ENCODE measurements at regions of chr14 and their contacts with region 1.

Region 1: DNA sequence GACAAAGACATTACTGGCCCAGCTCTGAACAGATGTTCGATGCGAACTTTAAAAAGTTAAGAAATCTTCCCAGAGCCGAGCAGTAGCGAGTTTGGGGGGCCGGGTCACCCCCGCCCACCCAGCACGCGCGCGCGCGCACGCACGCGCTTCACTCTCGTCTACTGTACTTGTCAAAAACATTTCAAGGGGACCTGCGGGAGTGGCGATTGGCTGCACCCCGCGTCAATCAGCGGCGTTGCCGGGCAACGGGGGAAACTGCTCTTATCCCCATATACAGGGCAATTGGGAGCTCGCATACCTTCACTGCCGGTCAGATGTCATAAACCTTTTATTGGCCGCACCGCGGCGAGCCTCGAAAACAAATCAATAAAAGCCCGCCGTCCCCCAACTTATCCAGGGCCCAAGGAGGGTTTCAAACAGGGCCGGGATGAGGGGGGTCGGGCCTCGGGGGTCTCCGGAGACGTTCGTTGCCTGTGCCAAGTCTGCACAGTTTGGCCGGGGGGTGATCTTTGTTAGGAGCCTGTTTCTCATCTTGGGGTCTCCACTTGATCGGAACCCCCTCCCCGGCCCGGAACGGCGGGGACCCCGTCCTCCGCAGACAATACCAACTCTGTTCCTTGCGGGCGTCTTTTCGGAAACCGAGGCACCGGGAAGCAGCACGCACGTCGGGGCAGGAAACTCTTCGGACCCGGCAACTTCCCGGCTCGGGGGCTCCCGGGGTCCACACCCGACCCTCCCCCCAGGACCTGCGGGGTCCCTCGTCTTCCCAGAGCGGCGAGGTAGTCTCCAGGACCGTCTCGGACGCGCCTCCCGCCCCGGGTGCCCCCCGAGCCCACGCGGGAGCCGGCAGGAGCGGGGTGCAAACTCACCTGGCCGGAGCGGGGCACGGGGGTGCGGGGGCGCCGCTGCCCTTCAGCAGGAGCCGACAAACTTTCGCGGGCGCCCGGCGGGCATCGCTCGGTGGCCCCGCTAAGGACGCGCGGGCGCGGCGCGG is 734 bp downstream of the FOXN3 start:
- DNase-seq: peak; percentile 97 to 100 (median 99)
- H3K4me3 ChIP-seq: peak overlapping the region; percentile 3 to 99 (median 74)
- H3K27ac ChIP-seq: peak overlapping the region; percentile 77 to 98 (median 96)
- H3K4me1 ChIP-seq: peaks cover 9 to 29% of the 10 kb centered on the region in 2 donors
- H3K27me3 ChIP-seq: no peaks in the 10 kb centered on the region
- CTCF ChIP-seq: no peak
- POLR2A ChIP-seq: peak; percentile 6 to 91

Region 2: GRCh38 chr14:89185919-89186855 is 230.1 kb before region 1 on chr14:
- intact Hi-C with region 1: loop called in 1 of 2 experiments (anchors 10 kb)
- DNase-seq: peak; percentile 59 to 86 (median 81)
- H3K4me3 ChIP-seq: no peak overlapping the region
- H3K27ac ChIP-seq: peak overlapping the region; percentile 48 to 86 (median 82)
- H3K4me1 ChIP-seq: peaks cover 18 to 32% of the 10 kb centered on the region in 2 donors
- H3K27me3 ChIP-seq: no peaks in the 10 kb centered on the region
- CTCF ChIP-seq: no peak
- POLR2A ChIP-seq: peak in 1 of 2 donors; percentile 6

Region 3: DNA sequence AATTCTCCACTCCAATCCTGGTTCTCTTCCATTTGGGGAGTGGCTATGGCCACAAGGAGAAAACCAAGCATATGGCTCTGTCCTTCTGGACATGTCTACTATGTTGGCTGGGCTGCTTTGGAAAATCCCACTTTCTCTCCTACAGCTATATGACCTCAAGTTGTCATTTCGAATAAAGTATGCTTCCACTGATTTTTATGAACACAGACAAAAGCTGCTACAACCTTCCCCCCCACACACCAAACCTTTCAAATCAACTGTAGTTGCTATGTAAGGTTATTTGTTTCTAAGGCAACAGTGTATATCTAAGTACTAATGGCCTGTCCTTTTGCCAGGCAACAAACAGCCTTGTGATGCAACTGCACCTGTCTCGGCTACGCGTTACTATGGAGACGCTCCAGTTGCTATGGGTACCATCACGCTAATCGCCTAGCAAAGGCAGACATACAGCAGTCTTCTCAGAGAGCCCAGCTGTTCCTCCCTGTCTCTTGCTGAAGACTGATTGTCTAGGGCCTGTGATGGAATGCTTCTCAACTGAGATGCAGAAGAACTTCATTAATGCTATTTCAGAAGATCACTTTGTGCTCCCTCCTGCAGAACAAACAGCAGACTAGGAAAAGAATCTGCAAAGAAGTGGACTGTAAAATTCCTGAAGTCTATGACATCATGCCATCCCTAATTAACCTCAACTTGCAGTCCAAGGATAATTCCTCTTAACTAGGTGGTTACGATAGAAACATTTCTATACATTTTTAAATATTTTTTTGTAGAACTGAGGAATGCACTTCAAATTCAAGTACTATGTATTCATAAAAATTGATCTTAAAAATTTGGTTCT is 66.9 kb before region 1 on chr14:
- intact Hi-C with region 1: loop called in 1 of 2 experiments (anchors 10 kb)
- DNase-seq: peak in 2 of 7 donors; percentile 45 to 92
- H3K4me3 ChIP-seq: no peak overlapping the region
- H3K27ac ChIP-seq: peak overlapping the region in 2 of 5 donors; percentile 1 to 22
- H3K4me1 ChIP-seq: peaks cover 22 to 33% of the 10 kb centered on the region in 2 donors
- H3K27me3 ChIP-seq: no peaks in the 10 kb centered on the region
- CTCF ChIP-seq: no peak
- POLR2A ChIP-seq: no peak

Region 4: GRCh38 chr14:89908712-89909450 is 492.6 kb after region 1 on chr14:
- intact Hi-C with region 1: loop called (anchors 5 to 10 kb)
- DNase-seq: no peak
- H3K4me3 ChIP-seq: no peak overlapping the region
- H3K27ac ChIP-seq: no peak overlapping the region
- H3K4me1 ChIP-seq: peaks cover 0 to 13% of the 10 kb centered on the region in 2 donors
- H3K27me3 ChIP-seq: no peaks in the 10 kb centered on the region
- CTCF ChIP-seq: no peak
- POLR2A ChIP-seq: no peak